ENCODE measurements at regions of chr17 and their contacts with region 1.

Region 1: DNA sequence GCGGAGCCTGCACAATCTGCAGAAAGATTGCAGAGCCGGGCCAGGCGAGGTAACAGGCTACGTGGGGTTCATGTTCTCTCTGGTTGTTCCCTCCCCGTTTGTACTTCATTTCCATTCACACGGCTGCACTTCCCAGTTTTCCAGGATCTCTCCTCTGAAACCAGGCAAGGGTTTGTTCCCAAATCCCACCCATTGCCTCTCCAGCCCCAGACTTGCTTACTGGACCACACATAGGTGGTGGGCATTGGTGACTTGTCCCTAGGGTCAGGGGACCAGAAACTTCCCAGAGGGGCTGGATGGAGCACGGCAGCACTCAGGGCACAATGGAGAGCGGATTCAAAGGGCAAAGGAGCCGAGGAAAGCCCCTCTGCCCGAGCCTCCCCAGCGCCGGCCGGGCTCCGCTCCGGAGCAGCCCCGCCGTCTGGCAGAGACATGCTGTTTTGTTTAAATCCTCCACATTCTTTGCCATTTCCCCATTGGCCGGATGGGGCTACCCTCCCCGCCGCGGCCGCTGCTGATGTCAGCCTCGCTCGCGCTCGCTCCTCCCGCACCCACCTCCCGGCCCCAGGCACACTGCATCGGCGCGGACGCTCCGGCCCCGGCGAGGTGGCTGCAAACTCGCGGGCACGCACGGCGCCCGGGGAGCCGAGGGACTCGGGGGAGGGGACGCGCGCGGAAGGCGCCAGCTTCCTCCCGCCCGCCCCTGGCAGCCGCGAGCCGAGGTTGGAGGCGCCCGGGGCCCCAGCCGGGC is at the start of gene PITPNC1:
- DNase-seq: peak; percentile 88
- H3K4me3 Mint-ChIP-seq: peak within 1 kb of the TSS; percentile 75
- H3K27ac Mint-ChIP-seq: no peak within 1 kb of the TSS
- H3K4me1 Mint-ChIP-seq: peaks cover 9% of the 10 kb centered on the region
- H3K27me3 Mint-ChIP-seq: no peaks in the 10 kb centered on the region
- CTCF ChIP-seq: no peak
- total RNA-seq, gene PITPNC1: 28.3 and 40.1 TPM in 2 replicates

Region 2: GRCh38 chr17:67018471-67019437 is 358.2 kb before region 1 on chr17:
- CTCF ChIA-PET with region 1: no interaction called
- POLR2A ChIA-PET with region 1: no interaction called
- intact Hi-C with region 1: no loop called
- DNase-seq: peak; percentile 17
- H3K4me3 Mint-ChIP-seq: no peak overlapping the region
- H3K27ac Mint-ChIP-seq: no peak overlapping the region
- H3K4me1 Mint-ChIP-seq: no peaks in the 10 kb centered on the region
- H3K27me3 Mint-ChIP-seq: no peaks in the 10 kb centered on the region
- CTCF ChIP-seq: no peak

Region 3: DNA sequence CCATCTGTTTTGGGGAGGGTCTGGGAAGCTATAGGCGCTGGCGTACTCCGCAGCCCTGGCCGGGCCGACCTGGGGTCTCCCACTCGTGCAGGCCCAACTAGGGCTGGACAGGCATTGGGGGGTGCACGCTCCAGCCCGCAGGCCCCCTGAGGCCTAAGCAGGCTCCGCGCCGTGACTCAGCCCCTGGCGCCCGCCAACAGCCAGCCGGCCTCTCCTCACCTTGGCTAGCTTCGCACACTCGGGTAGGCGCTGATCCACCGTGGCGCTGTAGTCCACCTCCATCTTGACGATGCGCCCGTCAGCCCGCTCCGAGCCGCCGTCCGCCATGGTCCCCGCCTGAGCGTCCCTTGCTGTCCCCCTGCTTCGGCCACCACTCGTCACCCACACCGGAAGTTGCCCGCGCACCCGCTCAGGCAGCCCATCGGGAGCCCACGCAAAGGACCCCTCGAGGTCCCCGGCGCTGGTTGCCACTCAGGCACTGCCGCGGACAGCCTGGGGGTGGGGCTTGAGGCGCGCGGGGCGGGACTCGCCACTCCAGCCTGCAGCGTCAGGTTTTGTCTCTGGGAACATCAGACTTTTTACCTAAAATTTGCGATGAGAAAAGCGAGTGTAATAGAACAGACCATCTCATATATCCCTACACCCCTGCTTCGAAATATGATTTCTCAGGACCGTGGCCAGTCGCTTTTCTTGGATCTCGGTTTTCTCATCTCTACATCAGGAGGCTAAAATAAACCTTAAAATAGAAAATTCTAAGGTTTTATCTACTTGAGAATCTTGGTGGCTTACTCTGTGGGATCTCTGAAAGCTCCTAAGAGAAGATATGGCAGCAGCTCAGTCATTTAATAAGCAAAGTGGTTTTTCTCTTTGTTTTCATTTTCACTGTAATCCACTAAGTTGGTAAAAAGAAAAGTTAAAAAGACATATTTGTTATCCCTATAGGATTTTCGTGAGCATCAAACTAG is 10.4 kb before region 1 on chr17 and contains the start of gene PSMD12:
- CTCF ChIA-PET with region 1: interaction called, 38 read pairs
- POLR2A ChIA-PET with region 1: interaction called, 54 read pairs
- intact Hi-C with region 1: no loop called
- DNase-seq: peak; percentile 90
- H3K4me3 Mint-ChIP-seq: peak within 1 kb of the TSS; percentile 90
- H3K27ac Mint-ChIP-seq: peak within 1 kb of the TSS; percentile 74
- H3K4me1 Mint-ChIP-seq: peaks cover 18% of the 10 kb centered on the region
- H3K27me3 Mint-ChIP-seq: no peaks in the 10 kb centered on the region
- CTCF ChIP-seq: no peak
- total RNA-seq, gene PSMD12: 93.1 and 107 TPM in 2 replicates

Region 4: DNA sequence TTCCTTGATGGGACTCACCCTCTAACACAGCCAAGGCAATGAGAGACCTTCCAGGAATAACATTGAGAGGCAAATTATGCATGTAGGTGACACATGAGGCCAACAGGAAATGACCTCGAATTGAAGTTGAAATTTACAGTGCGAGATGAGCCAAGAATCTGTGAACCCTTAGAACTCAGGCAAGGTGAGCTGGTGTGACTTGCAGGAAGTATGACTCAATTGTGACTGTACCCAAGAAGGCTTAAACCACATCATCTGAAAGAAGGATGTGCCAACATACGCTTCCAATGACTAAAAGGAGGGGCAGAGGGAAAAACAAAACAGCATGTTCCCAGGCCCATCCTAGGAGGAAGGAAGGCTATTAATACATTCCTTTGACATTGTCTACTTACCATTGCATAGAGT is 45.0 kb after region 1 on chr17:
- CTCF ChIA-PET with region 1: interaction called, 10 read pairs
- POLR2A ChIA-PET with region 1: interaction called, 15 read pairs
- intact Hi-C with region 1: no loop called
- DNase-seq: peak; percentile 99
- H3K4me3 Mint-ChIP-seq: peak overlapping the region; percentile 29
- H3K27ac Mint-ChIP-seq: peak overlapping the region; percentile 86
- H3K4me1 Mint-ChIP-seq: peaks cover 35% of the 10 kb centered on the region
- H3K27me3 Mint-ChIP-seq: no peaks in the 10 kb centered on the region
- CTCF ChIP-seq: no peak

Region 5: GRCh38 chr17:67475236-67475937 is 98.5 kb after region 1 on chr17:
- CTCF ChIA-PET with region 1: interaction called, 91 read pairs
- POLR2A ChIA-PET with region 1: interaction called, 40 read pairs
- intact Hi-C with region 1: loop called (anchors 1 kb)
- DNase-seq: peak; percentile 86
- H3K4me3 Mint-ChIP-seq: no peak overlapping the region
- H3K27ac Mint-ChIP-seq: no peak overlapping the region
- H3K4me1 Mint-ChIP-seq: peaks cover 26% of the 10 kb centered on the region
- H3K27me3 Mint-ChIP-seq: no peaks in the 10 kb centered on the region
- CTCF ChIP-seq: peak; percentile 87

Region 6: DNA sequence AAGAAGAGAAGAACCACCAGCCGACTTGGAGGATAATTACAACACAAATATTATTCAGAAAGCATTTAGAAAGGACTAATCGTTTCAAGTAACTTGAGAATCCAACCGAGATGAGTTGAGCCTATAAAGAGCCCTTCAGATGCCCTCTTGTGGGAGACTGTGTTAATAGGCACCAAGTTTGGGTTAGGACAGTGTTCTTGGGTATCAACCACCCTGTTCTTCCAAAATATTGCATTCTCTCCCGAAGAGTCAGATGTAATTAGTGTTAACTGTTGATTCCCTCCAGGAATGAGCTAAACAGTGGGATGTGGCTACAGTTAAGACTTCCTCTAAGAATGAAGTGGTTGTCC is 253.0 kb after region 1 on chr17:
- CTCF ChIA-PET with region 1: interaction called, 14 read pairs
- POLR2A ChIA-PET with region 1: no interaction called
- intact Hi-C with region 1: loop called (anchors 2 kb)
- DNase-seq: peak; percentile 36
- H3K4me3 Mint-ChIP-seq: no peak overlapping the region
- H3K27ac Mint-ChIP-seq: no peak overlapping the region
- H3K4me1 Mint-ChIP-seq: no peaks in the 10 kb centered on the region
- H3K27me3 Mint-ChIP-seq: no peaks in the 10 kb centered on the region
- CTCF ChIP-seq: peak; percentile 19

Region 7: GRCh38 chr17:67696853-67697505 is 320.1 kb after region 1 on chr17:
- CTCF ChIA-PET with region 1: interaction called, 34 read pairs
- POLR2A ChIA-PET with region 1: no interaction called
- intact Hi-C with region 1: no loop called
- DNase-seq: no peak
- H3K4me3 Mint-ChIP-seq: no peak overlapping the region
- H3K27ac Mint-ChIP-seq: no peak overlapping the region
- H3K4me1 Mint-ChIP-seq: no peaks in the 10 kb centered on the region
- H3K27me3 Mint-ChIP-seq: no peaks in the 10 kb centered on the region
- CTCF ChIP-seq: no peak

Region 8: DNA sequence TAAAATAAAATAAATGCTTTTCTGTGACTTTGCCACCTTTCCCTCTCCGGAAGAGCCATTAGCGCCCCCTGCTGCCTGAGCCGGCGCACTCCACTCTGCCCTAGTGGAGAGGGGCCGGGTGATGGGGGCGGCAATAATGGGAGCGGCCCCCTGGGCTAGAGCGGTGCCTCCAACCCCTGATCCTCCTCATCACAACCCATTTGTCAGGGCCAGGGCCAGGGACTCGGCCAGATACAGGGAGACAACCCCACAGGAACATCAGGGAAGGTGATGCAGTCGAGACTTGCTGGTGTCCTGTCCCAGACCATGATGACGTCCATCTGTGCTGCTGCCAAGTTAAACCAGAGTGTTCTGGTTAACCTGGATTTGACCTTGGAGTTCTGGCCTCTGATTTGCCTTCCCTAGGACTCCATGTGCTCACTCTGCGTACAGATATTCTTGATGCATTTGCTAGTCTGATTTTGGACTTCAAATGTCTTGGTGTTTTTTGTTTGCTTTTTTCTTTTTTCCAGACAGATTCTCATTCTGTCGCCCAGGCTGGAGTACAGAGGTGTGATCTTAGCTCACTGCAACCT is 402.3 kb after region 1 on chr17:
- CTCF ChIA-PET with region 1: no interaction called
- POLR2A ChIA-PET with region 1: no interaction called
- intact Hi-C with region 1: loop called (anchors 1 kb)
- DNase-seq: peak; percentile 58
- H3K4me3 Mint-ChIP-seq: no peak overlapping the region
- H3K27ac Mint-ChIP-seq: no peak overlapping the region
- H3K4me1 Mint-ChIP-seq: no peaks in the 10 kb centered on the region
- H3K27me3 Mint-ChIP-seq: no peaks in the 10 kb centered on the region
- CTCF ChIP-seq: peak; percentile 71

Measured in MCF 10A (cell line).